Caco-2 (cell line): ENCODE measurements at regions of chr5 and their contacts with region 1.

Region 1: DNA sequence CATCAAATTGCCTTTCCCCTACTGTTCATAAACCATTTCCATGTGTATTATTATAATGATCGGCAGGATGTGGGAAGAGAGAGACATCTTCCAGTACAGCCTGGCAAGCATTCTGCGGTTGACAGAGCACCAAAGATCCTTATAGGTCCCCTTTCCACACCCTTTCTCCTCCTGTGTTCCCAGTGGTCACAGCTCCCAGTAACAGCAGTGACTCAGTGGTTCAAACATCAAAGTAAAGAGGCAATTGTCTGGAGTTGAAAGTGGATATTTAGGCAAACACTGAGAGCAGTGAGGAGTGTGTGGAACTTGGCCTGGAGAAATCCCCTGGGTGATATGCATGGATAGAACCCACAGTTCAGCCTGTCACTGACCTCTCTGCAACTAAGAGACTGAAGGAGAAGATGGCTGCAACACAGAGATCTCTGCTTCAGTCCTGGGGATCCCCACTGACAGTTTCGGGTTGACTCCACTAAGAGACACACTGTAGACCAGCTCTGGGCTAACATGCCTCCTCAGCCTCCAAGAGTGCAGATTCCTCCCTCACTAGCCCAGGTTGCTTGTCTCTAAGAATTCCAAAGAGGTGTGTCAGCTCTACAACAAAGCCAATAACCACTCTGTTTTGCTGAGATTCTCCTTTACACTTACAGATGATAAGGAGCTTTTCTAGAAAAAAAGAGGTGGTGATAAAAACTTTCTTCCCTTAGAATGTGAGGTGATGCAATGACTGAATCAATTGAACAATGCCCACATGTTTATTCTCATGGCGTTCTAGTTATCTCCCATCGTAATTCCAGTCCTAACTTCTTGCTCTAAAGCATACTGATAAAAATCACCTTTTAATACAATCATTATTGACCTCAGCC is 94.4 kb upstream of the IL6ST start:
- DNase-seq: peak; percentile 83 to 87
- H3K4me3 ChIP-seq: no peak overlapping the region
- H3K4me3 Mint-ChIP-seq: peak overlapping the region; percentile 65
- H3K27ac Mint-ChIP-seq: peak overlapping the region; percentile 83
- H3K4me1 ChIP-seq: peaks cover 55% of the 10 kb centered on the region
- H3K4me1 Mint-ChIP-seq: peaks cover 33% of the 10 kb centered on the region
- H3K27me3 ChIP-seq: no peaks in the 10 kb centered on the region
- H3K27me3 Mint-ChIP-seq: no peaks in the 10 kb centered on the region
- CTCF ChIP-seq: no peak

Region 2: GRCh38 chr5:56026863-56027300 is 62.3 kb before region 1 on chr5:
- CTCF ChIA-PET with region 1: no interaction called
- POLR2A ChIA-PET with region 1: interaction called, 7 read pairs
- intact Hi-C with region 1: loop called (anchors 1 kb)
- DNase-seq: no peak
- H3K4me3 ChIP-seq: no peak overlapping the region
- H3K4me3 Mint-ChIP-seq: no peak overlapping the region
- H3K27ac Mint-ChIP-seq: no peak overlapping the region
- H3K4me1 ChIP-seq: peaks cover 56% of the 10 kb centered on the region
- H3K4me1 Mint-ChIP-seq: peaks cover 12% of the 10 kb centered on the region
- H3K27me3 ChIP-seq: no peaks in the 10 kb centered on the region
- H3K27me3 Mint-ChIP-seq: no peaks in the 10 kb centered on the region
- CTCF ChIP-seq: no peak

Region 3: GRCh38 chr5:56110646-56111403 is 21.6 kb after region 1 on chr5:
- CTCF ChIA-PET with region 1: no interaction called
- POLR2A ChIA-PET with region 1: no interaction called
- intact Hi-C with region 1: loop called (anchors 1 kb)
- DNase-seq: no peak
- H3K4me3 ChIP-seq: no peak overlapping the region
- H3K4me3 Mint-ChIP-seq: no peak overlapping the region
- H3K27ac Mint-ChIP-seq: peak overlapping the region; percentile 62
- H3K4me1 ChIP-seq: peaks cover 35% of the 10 kb centered on the region
- H3K4me1 Mint-ChIP-seq: peaks cover 33% of the 10 kb centered on the region
- H3K27me3 ChIP-seq: no peaks in the 10 kb centered on the region
- H3K27me3 Mint-ChIP-seq: no peaks in the 10 kb centered on the region
- CTCF ChIP-seq: no peak

Region 4: GRCh38 chr5:56148453-56148971 is 59.3 kb after region 1 on chr5:
- CTCF ChIA-PET with region 1: interaction called, 3 read pairs
- POLR2A ChIA-PET with region 1: interaction called, 7 read pairs
- intact Hi-C with region 1: loop called (anchors 1 kb)
- DNase-seq: no peak
- H3K4me3 ChIP-seq: no peak overlapping the region
- H3K4me3 Mint-ChIP-seq: no peak overlapping the region
- H3K27ac Mint-ChIP-seq: peak overlapping the region; percentile 32
- H3K4me1 ChIP-seq: peaks cover 55% of the 10 kb centered on the region
- H3K4me1 Mint-ChIP-seq: peaks cover 38% of the 10 kb centered on the region
- H3K27me3 ChIP-seq: no peaks in the 10 kb centered on the region
- H3K27me3 Mint-ChIP-seq: no peaks in the 10 kb centered on the region
- CTCF ChIP-seq: no peak

Region 5: GRCh38 chr5:56200856-56201666 is 111.9 kb after region 1 on chr5:
- CTCF ChIA-PET with region 1: no interaction called
- POLR2A ChIA-PET with region 1: no interaction called
- intact Hi-C with region 1: loop called (anchors 5 kb)
- DNase-seq: peak; percentile 84 to 85
- H3K4me3 ChIP-seq: no peak overlapping the region
- H3K4me3 Mint-ChIP-seq: no peak overlapping the region
- H3K27ac Mint-ChIP-seq: peak overlapping the region; percentile 42
- H3K4me1 ChIP-seq: peaks cover 21% of the 10 kb centered on the region
- H3K4me1 Mint-ChIP-seq: peaks cover 18% of the 10 kb centered on the region
- H3K27me3 ChIP-seq: no peaks in the 10 kb centered on the region
- H3K27me3 Mint-ChIP-seq: no peaks in the 10 kb centered on the region
- CTCF ChIP-seq: peak; percentile 73 to 93